Activated CD8-positive, alpha-beta memory T cell treated with anti-CD3 and anti-CD28 coated beads, Interleukin-2, amount 10 ng/mL, durations not matched to agents 7 days and 5 days (primary cell): ENCODE measurements at regions of chr17 and their contacts with region 1.

Region 1: GRCh38 chr17:68398691-68399637 is 58.3 kb downstream of the WIPI1 start:
- DNase-seq: peak; percentile 73
- ATAC-seq: peak; percentile 73
- H3K4me3 Mint-ChIP-seq: no peak overlapping the region
- H3K27ac Mint-ChIP-seq: peak overlapping the region; percentile 91
- H3K4me1 Mint-ChIP-seq: peaks cover 34% of the 10 kb centered on the region
- H3K27me3 Mint-ChIP-seq: no peaks in the 10 kb centered on the region

Region 2: DNA sequence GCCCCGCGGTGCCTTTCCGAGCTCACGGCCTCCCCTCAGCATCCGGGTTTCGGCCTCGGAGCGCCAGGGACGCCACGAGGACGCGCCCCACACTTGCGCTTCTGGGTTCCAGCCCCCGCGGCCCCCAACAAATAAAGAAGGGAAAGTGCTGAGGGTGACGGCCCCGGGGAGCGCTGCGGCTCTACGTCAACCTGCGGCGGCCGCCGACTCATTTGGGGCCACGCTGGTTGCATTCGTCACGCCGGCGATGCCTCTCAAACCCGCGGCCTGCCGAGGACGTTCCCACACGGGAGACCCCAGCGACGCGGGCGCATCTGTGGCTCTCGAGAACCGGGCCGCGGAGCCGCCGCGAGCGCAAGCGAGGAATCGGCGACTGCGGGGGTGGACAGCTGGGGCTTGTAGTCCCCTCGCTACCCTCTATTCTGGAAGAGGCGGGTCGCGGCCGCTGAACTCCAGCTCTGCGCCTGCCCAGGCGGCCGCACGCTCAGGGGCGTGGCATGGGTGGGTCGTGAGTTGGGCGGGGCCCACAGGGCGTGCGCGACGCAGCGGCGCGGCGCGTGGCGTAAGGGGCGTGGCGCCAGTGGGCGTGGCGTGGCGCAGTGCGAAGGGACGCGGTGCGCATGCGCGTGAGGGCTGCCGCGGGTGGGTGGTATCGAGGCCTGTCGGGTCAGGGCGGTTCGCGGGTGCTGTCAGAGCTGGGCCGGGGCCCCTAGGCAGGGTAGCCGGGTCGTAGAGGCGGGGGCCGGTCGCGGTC is 151.3 kb before region 1 on chr17 and contains the start of gene AMZ2:
- CTCF ChIA-PET with region 1: interaction called, 11 read pairs
- DNase-seq: peak; percentile 96
- ATAC-seq: peak; percentile 90
- H3K4me3 Mint-ChIP-seq: peak within 1 kb of the TSS; percentile 81
- H3K27ac Mint-ChIP-seq: peak within 1 kb of the TSS; percentile 91
- H3K4me1 Mint-ChIP-seq: peaks cover 48% of the 10 kb centered on the region
- H3K27me3 Mint-ChIP-seq: no peaks in the 10 kb centered on the region
- total RNA-seq, gene AMZ2: 106 to 107 TPM

Region 3: GRCh38 chr17:68255731-68256538 is 143.0 kb before region 1 on chr17:
- CTCF ChIA-PET with region 1: interaction called, 60 read pairs
- DNase-seq: no peak
- ATAC-seq: peak; percentile 14
- H3K4me3 Mint-ChIP-seq: peak overlapping the region; percentile 17
- H3K27ac Mint-ChIP-seq: peak overlapping the region; percentile 88
- H3K4me1 Mint-ChIP-seq: peaks cover 82% of the 10 kb centered on the region
- H3K27me3 Mint-ChIP-seq: no peaks in the 10 kb centered on the region

Region 4: GRCh38 chr17:68291844-68292695 is 106.9 kb before region 1 on chr17:
- CTCF ChIA-PET with region 1: interaction called, 29 read pairs
- DNase-seq: peak; percentile 98
- ATAC-seq: peak; percentile 81
- H3K4me3 Mint-ChIP-seq: peak overlapping the region; percentile 81
- H3K27ac Mint-ChIP-seq: peak overlapping the region; percentile 96
- H3K4me1 Mint-ChIP-seq: peaks cover 68% of the 10 kb centered on the region
- H3K27me3 Mint-ChIP-seq: peaks cover 2% of the 10 kb centered on the region

Region 5: GRCh38 chr17:68346448-68346847 is 52.5 kb before region 1 on chr17:
- CTCF ChIA-PET with region 1: interaction called, 10 read pairs
- DNase-seq: peak; percentile 93
- ATAC-seq: peak; percentile 69
- H3K4me3 Mint-ChIP-seq: peak overlapping the region; percentile 61
- H3K27ac Mint-ChIP-seq: peak overlapping the region; percentile 99
- H3K4me1 Mint-ChIP-seq: peaks cover 80% of the 10 kb centered on the region
- H3K27me3 Mint-ChIP-seq: no peaks in the 10 kb centered on the region

Region 6: GRCh38 chr17:68356520-68356919 is 42.4 kb before region 1 on chr17:
- CTCF ChIA-PET with region 1: interaction called, 51 read pairs
- DNase-seq: peak; percentile 92
- ATAC-seq: peak; percentile 90
- H3K4me3 Mint-ChIP-seq: peak overlapping the region; percentile 74
- H3K27ac Mint-ChIP-seq: peak overlapping the region; percentile 95
- H3K4me1 Mint-ChIP-seq: peaks cover 79% of the 10 kb centered on the region
- H3K27me3 Mint-ChIP-seq: no peaks in the 10 kb centered on the region

Region 7: DNA sequence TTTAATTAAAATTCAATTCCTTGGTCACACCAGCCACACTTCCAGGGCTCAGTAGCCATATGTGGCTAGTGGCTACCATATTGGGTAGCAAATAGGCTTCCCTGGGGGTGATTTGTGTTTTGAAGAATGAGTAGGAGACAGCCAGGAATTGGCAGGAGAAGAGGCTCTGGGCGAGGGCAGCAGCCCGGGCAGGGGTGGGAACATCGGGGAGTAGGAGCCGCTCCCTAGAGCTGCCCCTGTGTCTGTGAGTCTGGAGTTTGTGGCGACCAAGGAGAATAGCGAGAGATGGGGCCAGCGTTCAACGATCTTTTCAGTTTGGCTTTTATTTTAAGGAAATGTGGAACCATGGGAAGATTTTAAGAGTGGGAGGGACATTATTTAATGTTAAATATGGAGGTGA is 23.4 kb before region 1 on chr17:
- CTCF ChIA-PET with region 1: no interaction called
- DNase-seq: no peak
- ATAC-seq: no peak
- H3K4me3 Mint-ChIP-seq: no peak overlapping the region
- H3K27ac Mint-ChIP-seq: no peak overlapping the region
- H3K4me1 Mint-ChIP-seq: peaks cover under 1% of the 10 kb centered on the region
- H3K27me3 Mint-ChIP-seq: no peaks in the 10 kb centered on the region

Region 8: GRCh38 chr17:68387812-68388557 is 11.0 kb before region 1 on chr17:
- CTCF ChIA-PET with region 1: interaction called, 13 read pairs
- DNase-seq: peak; percentile 26
- ATAC-seq: no peak
- H3K4me3 Mint-ChIP-seq: no peak overlapping the region
- H3K27ac Mint-ChIP-seq: no peak overlapping the region
- H3K4me1 Mint-ChIP-seq: peaks cover 15% of the 10 kb centered on the region
- H3K27me3 Mint-ChIP-seq: no peaks in the 10 kb centered on the region

Region 9: DNA sequence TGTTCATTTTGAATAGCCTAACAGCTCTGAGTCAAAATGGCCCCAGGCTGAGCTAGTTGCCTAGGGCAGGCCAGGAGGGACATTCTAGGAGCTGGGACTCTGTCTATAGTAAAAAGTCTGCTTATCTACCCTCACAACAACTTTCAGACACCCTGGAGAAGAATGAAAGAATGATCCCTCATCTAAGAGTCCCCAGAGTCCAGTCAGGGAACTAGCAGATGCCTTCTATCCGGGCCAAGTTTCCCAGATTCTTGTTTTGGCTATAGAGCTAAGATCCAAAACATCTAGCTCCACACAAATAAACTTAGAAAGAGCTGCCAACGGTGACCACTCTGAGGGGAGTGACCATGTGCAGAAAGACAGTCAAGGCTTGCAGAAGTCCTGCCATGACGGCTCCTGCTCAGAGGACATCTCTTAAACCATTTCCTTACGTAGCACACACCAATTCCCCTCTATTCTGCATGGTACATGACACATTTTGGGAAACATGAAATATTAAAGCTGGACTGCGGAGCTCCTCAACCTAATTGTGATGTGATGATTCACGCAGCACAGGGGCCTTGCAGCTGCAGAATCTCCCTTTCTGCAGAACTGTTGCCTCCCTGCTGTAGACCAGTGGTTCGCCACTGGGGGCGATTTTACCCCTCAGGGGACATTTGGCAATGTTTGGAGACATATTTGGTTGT is 178.0 kb after region 1 on chr17:
- CTCF ChIA-PET with region 1: no interaction called
- DNase-seq: no peak
- ATAC-seq: no peak
- H3K4me3 Mint-ChIP-seq: no peak overlapping the region
- H3K27ac Mint-ChIP-seq: no peak overlapping the region
- H3K4me1 Mint-ChIP-seq: no peaks in the 10 kb centered on the region
- H3K27me3 Mint-ChIP-seq: peaks cover 2% of the 10 kb centered on the region